AG04449 (cell line): ENCODE measurements at regions of chr1 and their contacts with region 1.

Region 1: GRCh38 chr1:162035241-162035640 is 11.6 kb upstream of the OLFML2B start:
- DNase-seq: no peak
- H3K4me3 ChIP-seq: no peak overlapping the region
- CTCF ChIP-seq: no peak

Region 2: DNA sequence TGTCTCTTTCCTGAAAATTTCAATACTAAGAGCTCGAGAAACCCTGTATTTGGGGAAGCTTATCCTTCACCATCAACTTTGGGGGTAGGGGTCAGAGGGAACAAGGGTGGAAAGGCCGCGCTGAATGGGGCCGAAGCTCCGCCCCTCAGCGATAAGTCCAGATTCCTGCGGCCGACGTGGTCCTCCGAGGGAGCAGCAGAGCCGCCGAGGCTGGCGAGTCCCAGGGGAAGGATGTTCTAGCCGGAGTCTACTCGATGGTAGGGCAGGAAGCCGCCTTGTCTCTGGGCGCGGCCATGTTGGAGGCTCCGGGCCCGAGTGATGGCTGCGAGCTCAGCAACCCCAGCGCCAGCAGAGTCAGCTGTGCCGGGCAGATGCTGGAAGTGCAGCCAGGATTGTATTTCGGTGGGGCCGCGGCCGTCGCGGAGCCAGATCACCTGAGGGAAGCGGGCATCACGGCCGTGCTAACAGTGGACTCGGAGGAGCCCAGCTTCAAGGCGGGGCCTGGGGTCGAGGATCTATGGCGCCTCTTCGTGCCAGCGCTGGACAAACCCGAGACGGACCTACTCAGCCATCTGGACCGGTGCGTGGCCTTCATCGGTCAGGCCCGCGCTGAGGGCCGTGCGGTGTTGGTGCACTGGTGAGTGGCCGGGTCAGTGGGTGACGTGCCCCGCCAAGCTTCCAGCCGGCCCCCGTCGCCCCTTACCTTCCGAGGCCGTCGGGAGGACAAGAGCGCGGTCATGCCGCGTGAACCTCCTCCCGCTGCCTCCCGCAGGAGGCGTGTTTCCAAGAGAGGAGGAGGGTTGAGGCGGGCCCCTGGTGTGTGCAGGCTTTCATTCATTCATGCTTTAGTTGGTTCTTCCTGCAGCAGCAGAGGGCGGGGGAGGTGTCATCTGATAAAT is 285.5 kb before region 1 on chr1 and contains the start of gene DUSP12:
- CTCF ChIA-PET with region 1: interaction called, 15 read pairs
- POLR2A ChIA-PET with region 1: no interaction called
- DNase-seq: peak; percentile 72
- H3K4me3 ChIP-seq: peak within 1 kb of the TSS; percentile 97
- CTCF ChIP-seq: peak; percentile 47

Region 3: GRCh38 chr1:161801955-161802354 is 233.3 kb before region 1 on chr1:
- CTCF ChIA-PET with region 1: interaction called, 797 read pairs
- POLR2A ChIA-PET with region 1: no interaction called
- DNase-seq: no peak
- H3K4me3 ChIP-seq: no peak overlapping the region
- CTCF ChIP-seq: no peak

Region 4: GRCh38 chr1:161855260-161855659 is 180.0 kb before region 1 on chr1:
- CTCF ChIA-PET with region 1: interaction called, 23 read pairs
- POLR2A ChIA-PET with region 1: no interaction called
- DNase-seq: no peak
- H3K4me3 ChIP-seq: no peak overlapping the region
- CTCF ChIP-seq: no peak

Region 5: GRCh38 chr1:162003826-162004208 is 31.4 kb before region 1 on chr1:
- CTCF ChIA-PET with region 1: interaction called, 11 read pairs
- POLR2A ChIA-PET with region 1: no interaction called
- DNase-seq: peak; percentile 75
- H3K4me3 ChIP-seq: no peak overlapping the region
- CTCF ChIP-seq: no peak

Region 6: GRCh38 chr1:162046921-162047320 is 11.7 kb after region 1 on chr1:
- CTCF ChIA-PET with region 1: interaction called, 20 read pairs
- POLR2A ChIA-PET with region 1: no interaction called
- DNase-seq: no peak
- H3K4me3 ChIP-seq: no peak overlapping the region
- CTCF ChIP-seq: no peak